Activated CD4-positive, alpha-beta memory T cell treated with anti-CD3 and anti-CD28 coated beads for 36 hours (primary cell): ENCODE measurements at regions of chrX and their contacts with region 1.

Region 1: DNA sequence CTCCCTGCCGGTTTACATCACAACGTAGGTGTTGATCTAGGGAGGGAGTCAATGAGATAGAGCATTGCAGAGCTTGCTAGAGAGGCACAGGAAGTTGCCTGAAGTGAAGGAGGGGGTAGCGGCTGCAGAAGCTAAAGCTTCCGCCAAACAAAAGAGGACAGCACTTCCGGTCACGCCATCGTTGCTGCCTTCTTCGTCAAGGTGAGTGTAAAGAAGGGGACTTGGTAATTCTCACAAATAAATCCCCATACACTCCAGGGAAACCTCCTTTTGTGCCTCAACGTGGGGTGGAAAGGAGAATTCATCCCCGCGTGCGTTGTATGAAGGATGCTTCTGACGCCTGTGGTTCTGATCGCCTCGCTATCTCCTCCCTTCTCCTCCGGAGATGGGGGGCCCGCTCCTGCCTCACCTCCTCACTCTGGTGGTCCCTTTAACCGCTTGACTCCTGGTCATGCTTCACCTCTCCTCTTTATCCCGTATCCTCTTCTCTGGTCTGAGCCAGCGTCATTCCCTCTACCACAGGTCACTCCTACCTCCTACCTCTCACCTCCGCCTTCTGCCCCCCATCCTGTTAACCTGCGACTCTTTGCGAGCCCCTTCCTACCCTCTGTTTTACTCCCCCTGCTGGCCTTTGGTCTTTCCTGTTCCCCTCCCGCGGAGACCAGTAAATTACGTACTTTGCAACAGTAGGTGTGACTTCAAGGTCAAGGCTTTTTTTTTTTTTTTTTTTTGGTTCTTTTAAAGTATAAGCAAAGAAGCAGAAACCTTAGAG is 59.9 kb downstream of the GSPT2 start:
- DNase-seq: peak; percentile 71
- H3K4me3 Mint-ChIP-seq: peak overlapping the region; percentile 97
- H3K27ac Mint-ChIP-seq: peak overlapping the region; percentile 97
- H3K4me1 Mint-ChIP-seq: peaks cover 25% of the 10 kb centered on the region
- H3K27me3 Mint-ChIP-seq: no peaks in the 10 kb centered on the region

Region 2: GRCh38 chrX:51476930-51477329 is 326.2 kb before region 1 on chrX:
- CTCF ChIA-PET with region 1: no interaction called
- POLR2A ChIA-PET with region 1: no interaction called
- intact Hi-C with region 1: no loop called
- DNase-seq: no peak
- H3K4me3 Mint-ChIP-seq: no peak overlapping the region
- H3K27ac Mint-ChIP-seq: no peak overlapping the region
- H3K4me1 Mint-ChIP-seq: no peaks in the 10 kb centered on the region
- H3K27me3 Mint-ChIP-seq: no peaks in the 10 kb centered on the region

Region 3: DNA sequence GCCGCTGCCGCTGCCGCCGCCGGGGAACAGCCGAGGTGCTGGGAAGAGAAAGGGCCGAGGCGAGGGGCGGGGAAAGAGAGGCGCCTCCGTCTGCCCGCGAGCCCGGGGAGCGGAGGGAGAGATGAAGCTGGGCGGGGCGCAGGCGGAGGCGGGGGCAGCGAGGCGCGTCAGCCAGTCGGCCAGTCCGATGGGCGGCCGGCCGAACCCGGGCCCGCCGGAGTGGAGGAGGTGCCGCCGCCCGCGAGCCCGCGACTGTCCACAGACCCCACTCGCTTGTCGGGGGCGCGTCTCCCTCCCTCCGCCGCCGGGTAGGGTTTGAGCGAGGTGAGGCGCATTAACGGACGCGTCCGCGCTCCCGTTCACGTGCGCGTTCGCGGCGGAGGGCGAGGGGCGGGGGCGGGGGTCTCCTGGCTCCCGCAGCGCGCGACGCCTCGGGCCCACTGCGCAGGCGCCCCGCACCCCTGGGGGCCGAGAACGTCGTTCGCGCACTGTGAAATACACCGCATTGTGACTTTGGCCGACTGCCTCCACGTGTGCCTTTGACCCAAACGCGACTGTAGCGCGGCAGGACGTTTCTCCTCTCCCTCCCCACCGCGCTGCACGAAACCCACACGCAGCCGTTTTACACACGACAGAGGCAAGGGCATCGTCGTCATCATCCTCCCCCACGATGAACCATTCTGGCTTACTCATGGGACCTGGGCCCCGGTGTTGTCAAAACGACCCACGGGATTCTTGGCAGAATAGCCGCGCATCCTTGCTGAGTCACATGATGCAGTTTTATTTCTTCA is 306.4 kb before region 1 on chrX and contains the start of gene NUDT11:
- CTCF ChIA-PET with region 1: no interaction called
- POLR2A ChIA-PET with region 1: no interaction called
- intact Hi-C with region 1: loop called (anchors 10 kb)
- DNase-seq: peak; percentile 67
- H3K4me3 Mint-ChIP-seq: peak within 1 kb of the TSS; percentile 80
- H3K27ac Mint-ChIP-seq: peak within 1 kb of the TSS; percentile 80
- H3K4me1 Mint-ChIP-seq: peaks cover 10% of the 10 kb centered on the region
- H3K27me3 Mint-ChIP-seq: peaks cover 14% of the 10 kb centered on the region
- total RNA-seq, gene NUDT11: 2.6 to 2.8 TPM

Region 4: DNA sequence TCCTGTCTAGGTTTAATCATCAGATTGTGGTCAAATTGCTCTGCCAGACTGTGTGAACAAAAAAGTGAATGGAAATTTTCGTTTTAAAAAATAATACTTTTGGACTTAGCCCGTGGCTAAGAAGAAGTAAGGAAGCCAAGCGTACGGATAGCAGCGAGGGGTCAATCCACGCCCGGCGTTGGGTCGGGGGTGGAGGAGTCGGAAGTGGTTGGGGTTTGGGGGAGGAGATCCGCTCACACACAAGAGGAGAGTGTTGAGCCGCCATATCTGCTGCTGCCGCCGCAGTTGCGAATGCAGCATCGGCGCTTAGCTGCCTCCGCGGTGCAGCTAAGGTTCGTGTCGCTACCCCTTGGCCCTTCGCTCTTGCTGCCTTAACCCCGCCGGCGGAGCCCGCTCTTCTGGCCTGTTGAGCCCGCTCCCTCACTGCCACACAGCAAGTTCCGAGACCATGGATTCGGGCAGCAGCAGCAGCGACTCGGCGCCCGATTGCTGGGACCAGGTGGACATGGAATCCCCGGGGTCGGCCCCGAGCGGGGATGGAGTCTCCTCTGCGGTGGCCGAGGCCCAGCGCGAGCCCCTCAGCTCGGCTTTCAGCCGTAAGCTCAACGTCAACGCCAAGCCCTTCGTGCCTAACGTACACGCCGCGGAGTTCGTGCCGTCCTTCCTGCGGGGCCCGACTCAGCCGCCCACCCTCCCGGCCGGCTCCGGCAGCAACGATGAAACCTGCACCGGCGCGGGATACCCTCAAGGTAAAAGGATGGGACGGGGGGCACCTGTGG is 59.7 kb before region 1 on chrX and contains the start of gene GSPT2:
- CTCF ChIA-PET with region 1: interaction called, 3 read pairs
- POLR2A ChIA-PET with region 1: no interaction called
- intact Hi-C with region 1: loop called (anchors 1 kb)
- DNase-seq: peak; percentile 82
- H3K4me3 Mint-ChIP-seq: peak within 1 kb of the TSS; percentile 76
- H3K27ac Mint-ChIP-seq: peak within 1 kb of the TSS; percentile 33
- H3K4me1 Mint-ChIP-seq: peaks cover 18% of the 10 kb centered on the region
- H3K27me3 Mint-ChIP-seq: no peaks in the 10 kb centered on the region
- total RNA-seq, gene GSPT2: 8.8 to 9.0 TPM

Region 5: GRCh38 chrX:51759055-51759839 is 43.9 kb before region 1 on chrX:
- CTCF ChIA-PET with region 1: no interaction called
- POLR2A ChIA-PET with region 1: no interaction called
- intact Hi-C with region 1: no loop called
- DNase-seq: no peak
- H3K4me3 Mint-ChIP-seq: no peak overlapping the region
- H3K27ac Mint-ChIP-seq: no peak overlapping the region
- H3K4me1 Mint-ChIP-seq: no peaks in the 10 kb centered on the region
- H3K27me3 Mint-ChIP-seq: no peaks in the 10 kb centered on the region

Region 6: DNA sequence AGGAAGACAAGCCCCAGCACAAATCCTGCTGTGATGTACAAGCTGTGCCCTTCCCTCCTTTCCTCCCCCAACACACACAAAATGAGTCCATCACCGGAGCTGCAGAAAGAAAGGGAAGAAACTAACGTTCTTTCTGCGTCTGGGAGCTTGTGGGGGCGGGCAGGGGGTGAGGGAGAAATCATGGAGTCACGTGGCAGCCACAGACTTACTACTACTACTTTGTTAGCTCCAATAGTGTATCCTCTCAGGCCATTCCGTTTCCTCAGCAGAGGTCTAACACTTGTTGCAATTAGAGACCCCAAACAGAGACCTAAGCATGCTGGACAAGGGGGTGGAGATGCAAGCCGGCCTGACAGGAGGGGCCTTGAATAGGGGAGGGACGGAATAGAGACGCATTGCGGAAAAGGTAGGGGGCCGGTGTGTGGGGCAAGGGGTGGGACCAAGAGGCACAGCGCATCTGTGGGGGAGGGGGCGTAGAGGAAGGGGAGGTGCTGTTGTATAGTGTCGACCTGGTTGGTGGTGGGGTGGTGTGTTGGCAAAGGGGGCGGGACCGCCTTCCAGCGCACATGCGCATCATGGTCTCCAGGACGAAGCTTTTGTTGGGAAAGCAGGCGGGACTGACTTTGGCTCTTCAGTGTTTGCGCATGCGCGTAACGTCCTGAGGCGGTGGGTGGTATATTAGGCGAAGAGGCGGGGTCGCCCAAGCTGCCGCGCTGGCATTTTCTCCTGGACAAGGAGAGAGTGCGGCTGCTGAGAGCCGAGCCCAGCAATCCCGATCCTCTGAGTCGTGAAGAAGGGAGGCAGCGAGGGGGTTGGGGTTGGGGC is 90.0 kb after region 1 on chrX and contains the start of gene MAGED1:
- CTCF ChIA-PET with region 1: no interaction called
- POLR2A ChIA-PET with region 1: no interaction called
- intact Hi-C with region 1: loop called (anchors 1 kb)
- DNase-seq: peak; percentile 89
- H3K4me3 Mint-ChIP-seq: peak within 1 kb of the TSS; percentile 91
- H3K27ac Mint-ChIP-seq: peak within 1 kb of the TSS; percentile 77
- H3K4me1 Mint-ChIP-seq: peaks cover 7% of the 10 kb centered on the region
- H3K27me3 Mint-ChIP-seq: no peaks in the 10 kb centered on the region
- total RNA-seq, gene MAGED1: 42.7 to 43.1 TPM

Region 7: DNA sequence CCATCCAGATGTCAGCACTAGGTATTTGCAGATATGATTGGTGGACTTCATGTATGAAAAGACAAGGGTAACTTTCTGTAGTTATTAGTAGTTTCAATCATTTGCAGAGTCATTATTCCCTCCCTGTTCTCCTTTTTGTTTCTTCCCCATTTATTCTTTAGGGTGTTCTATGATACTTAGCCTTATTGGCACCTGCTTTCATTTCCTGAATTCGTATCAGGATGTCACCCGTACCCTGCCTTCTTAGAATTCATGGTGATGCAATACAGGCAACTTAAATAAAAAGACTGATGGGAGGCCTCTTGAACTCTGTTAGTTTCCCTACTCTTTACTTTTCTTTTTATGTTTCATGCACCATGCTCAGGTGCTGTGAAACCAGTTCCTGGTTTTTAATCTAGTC is 114.5 kb after region 1 on chrX:
- CTCF ChIA-PET with region 1: no interaction called
- POLR2A ChIA-PET with region 1: no interaction called
- intact Hi-C with region 1: no loop called
- DNase-seq: no peak
- H3K4me3 Mint-ChIP-seq: no peak overlapping the region
- H3K27ac Mint-ChIP-seq: no peak overlapping the region
- H3K4me1 Mint-ChIP-seq: no peaks in the 10 kb centered on the region
- H3K27me3 Mint-ChIP-seq: peaks cover 6% of the 10 kb centered on the region